ENCODE measurements at regions of chr14 and their contacts with region 1.

Region 1: DNA sequence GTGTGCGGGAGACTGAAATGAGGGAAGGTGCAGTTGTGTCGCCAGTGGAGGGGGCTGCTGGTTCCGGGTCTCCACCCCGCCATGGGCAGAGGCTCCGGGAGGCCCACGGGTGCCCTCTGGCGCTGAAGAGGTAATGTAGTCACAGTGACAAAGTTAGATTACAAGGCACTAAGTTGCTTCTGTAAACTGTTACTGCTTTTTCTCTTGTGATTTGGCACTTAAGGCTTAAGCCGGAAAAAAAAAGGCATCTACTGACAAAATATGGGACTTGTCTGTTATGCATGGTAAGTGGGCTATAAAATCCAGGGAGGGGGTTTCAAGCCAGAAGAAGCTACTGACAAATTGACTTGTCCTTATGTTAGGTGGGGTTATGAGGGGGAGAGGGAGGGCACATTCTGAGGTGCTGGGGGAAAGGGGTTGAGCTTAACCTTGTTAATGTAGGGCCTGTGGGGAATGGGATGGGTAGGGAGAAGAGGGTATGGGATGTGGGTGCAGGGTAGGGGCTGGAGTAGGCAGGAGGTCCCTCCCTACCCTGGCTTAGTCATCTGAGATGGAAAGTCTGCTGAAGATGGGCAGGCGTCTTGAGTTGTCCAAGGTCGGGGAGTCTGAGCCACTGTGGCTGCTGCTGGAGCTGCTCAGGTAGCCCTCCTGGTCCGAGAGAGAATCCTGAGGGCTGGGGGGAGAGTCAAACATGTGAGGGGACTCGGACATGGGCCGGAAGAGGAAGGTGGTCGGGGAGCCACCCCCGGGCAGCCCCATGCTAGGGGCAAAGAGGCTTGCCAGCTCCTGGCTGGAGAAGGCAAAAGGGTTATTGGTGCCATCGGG is 3.7 kb downstream of the ZFP36L1 start:
- DNase-seq: peak; percentile 62
- ATAC-seq: no peak
- H3K4me3 Mint-ChIP-seq: peak overlapping the region; percentile 100
- H3K27ac Mint-ChIP-seq: peak overlapping the region; percentile 99
- H3K4me1 Mint-ChIP-seq: peaks cover 54% of the 10 kb centered on the region
- H3K27me3 Mint-ChIP-seq: no peaks in the 10 kb centered on the region
- CTCF ChIP-seq: no peak

Region 2: DNA sequence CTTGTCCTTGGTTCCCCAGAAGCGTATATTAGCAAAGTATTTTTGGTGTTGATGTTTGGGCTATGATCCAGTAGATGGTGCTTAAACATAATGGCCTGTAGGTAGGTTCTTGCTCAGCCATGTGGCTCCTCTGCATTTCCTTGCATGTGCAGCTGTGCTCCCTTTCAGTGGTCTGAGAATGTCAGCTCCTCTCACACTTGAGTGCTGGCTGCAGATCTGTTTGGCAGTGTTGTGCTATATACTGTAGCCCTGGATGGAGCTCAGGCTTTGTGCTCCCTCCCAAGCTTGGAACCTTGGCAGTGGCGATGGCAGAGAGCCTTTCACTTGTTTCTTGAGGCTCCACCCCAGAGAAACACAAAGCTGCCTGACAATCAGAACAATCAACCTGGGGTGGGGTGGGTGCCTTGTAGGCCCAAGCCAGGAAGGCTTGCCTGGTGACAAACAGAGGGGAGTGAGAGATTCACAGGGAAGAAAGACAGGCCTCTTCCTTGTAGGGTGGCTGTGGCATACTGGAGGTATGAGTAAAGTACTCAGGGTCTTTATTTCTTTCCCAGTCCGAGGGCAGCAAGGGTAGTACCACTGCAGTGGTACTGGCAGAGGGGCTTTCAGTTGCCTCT is 714.3 kb before region 1 on chr14:
- CTCF ChIA-PET with region 1: no interaction called
- POLR2A ChIA-PET with region 1: no interaction called
- intact Hi-C with region 1: no loop called
- DNase-seq: no peak
- ATAC-seq: no peak
- H3K4me3 Mint-ChIP-seq: no peak overlapping the region
- H3K27ac Mint-ChIP-seq: no peak overlapping the region
- H3K4me1 Mint-ChIP-seq: peaks cover 28% of the 10 kb centered on the region
- H3K27me3 Mint-ChIP-seq: no peaks in the 10 kb centered on the region
- CTCF ChIP-seq: no peak

Region 3: DNA sequence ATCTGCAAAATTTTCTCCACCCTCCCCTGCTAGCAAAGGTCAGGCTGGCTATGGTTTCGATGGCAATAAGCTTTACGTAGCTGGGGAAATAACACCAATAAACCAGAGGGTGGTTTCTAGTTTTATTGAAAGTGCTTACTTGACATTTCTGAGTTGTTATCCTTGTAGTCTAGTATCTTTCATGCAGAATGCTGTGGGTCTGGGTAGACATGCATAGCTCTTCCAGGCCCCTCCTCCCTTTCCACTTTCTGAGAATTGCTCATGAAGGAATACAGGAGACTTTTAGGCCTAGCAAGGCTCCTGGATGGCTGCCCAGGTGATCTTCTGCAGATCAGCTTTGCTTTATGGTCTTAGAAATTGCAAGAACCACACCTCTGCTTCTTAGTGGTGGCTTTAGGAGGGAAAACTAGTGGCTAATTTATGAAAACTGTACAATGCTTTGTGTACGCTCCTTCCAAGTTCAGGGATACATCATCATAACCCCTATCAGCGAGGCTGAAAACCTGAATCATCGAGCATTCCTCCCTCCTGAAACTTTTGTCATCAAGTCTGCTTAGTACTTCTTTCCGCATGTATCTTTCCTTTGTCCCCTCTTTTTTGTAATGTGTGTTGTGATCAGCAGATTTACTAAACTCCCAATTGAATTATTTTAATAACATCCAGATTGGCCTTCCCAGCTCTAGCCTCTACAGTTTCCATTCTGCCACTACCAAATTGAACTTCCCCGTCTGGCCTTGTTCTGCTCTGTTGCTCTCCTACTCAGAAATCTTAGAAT is 496.6 kb before region 1 on chr14:
- CTCF ChIA-PET with region 1: no interaction called
- POLR2A ChIA-PET with region 1: interaction called, 361 read pairs
- intact Hi-C with region 1: no loop called
- DNase-seq: no peak
- ATAC-seq: peak; percentile 35
- H3K4me3 Mint-ChIP-seq: peak overlapping the region; percentile 59
- H3K27ac Mint-ChIP-seq: peak overlapping the region; percentile 96
- H3K4me1 Mint-ChIP-seq: peaks cover 77% of the 10 kb centered on the region
- H3K27me3 Mint-ChIP-seq: no peaks in the 10 kb centered on the region
- CTCF ChIP-seq: no peak

Region 4: GRCh38 chr14:68495101-68496039 is 293.8 kb before region 1 on chr14:
- CTCF ChIA-PET with region 1: interaction called, 8 read pairs
- POLR2A ChIA-PET with region 1: interaction called, 585 read pairs
- intact Hi-C with region 1: loop called (anchors 1 kb)
- DNase-seq: no peak
- ATAC-seq: peak; percentile 92
- H3K4me3 Mint-ChIP-seq: peak overlapping the region; percentile 64
- H3K27ac Mint-ChIP-seq: peak overlapping the region; percentile 98
- H3K4me1 Mint-ChIP-seq: peaks cover 84% of the 10 kb centered on the region
- H3K27me3 Mint-ChIP-seq: no peaks in the 10 kb centered on the region
- CTCF ChIP-seq: no peak

Region 5: GRCh38 chr14:68627880-68628607 is 161.2 kb before region 1 on chr14:
- CTCF ChIA-PET with region 1: no interaction called
- POLR2A ChIA-PET with region 1: interaction called, 12 read pairs
- intact Hi-C with region 1: no loop called
- DNase-seq: peak; percentile 52
- ATAC-seq: peak; percentile 76
- H3K4me3 Mint-ChIP-seq: peak overlapping the region; percentile 80
- H3K27ac Mint-ChIP-seq: peak overlapping the region; percentile 80
- H3K4me1 Mint-ChIP-seq: peaks cover 28% of the 10 kb centered on the region
- H3K27me3 Mint-ChIP-seq: no peaks in the 10 kb centered on the region
- CTCF ChIP-seq: no peak

Region 6: GRCh38 chr14:68734231-68734775 is 54.9 kb before region 1 on chr14:
- CTCF ChIA-PET with region 1: no interaction called
- POLR2A ChIA-PET with region 1: interaction called, 49 read pairs
- intact Hi-C with region 1: loop called (anchors 1 kb)
- DNase-seq: no peak
- ATAC-seq: peak; percentile 74
- H3K4me3 Mint-ChIP-seq: peak overlapping the region; percentile 39
- H3K27ac Mint-ChIP-seq: peak overlapping the region; percentile 82
- H3K4me1 Mint-ChIP-seq: peaks cover 78% of the 10 kb centered on the region
- H3K27me3 Mint-ChIP-seq: no peaks in the 10 kb centered on the region
- CTCF ChIP-seq: no peak

Region 7: GRCh38 chr14:68843471-68844209 is 54.4 kb after region 1 on chr14:
- CTCF ChIA-PET with region 1: interaction called, 10 read pairs
- POLR2A ChIA-PET with region 1: interaction called, 11 read pairs
- intact Hi-C with region 1: loop called (anchors 1 kb)
- DNase-seq: peak; percentile 66
- ATAC-seq: peak; percentile 93
- H3K4me3 Mint-ChIP-seq: peak overlapping the region; percentile 65
- H3K27ac Mint-ChIP-seq: peak overlapping the region; percentile 4
- H3K4me1 Mint-ChIP-seq: peaks cover 15% of the 10 kb centered on the region
- H3K27me3 Mint-ChIP-seq: peaks cover 4% of the 10 kb centered on the region
- CTCF ChIP-seq: peak; percentile 93

Region 8: DNA sequence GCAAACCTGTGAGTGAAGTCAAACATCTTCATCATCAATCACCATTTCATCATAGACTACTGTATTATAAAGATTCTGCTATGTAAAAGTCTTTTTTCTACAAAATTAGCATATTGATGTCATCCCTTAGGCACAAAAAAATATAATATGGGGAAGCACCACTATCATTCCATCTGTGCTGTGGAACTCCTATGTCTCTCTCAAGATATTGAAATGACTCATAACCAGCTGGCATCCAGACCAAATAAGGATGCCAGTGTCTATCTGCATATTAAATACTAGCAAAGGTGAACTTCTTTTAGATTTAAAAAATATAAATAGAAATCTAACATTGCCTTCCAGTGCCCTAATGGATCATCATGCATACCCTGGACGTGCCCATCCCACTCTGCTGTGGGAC is 381.6 kb after region 1 on chr14:
- CTCF ChIA-PET with region 1: no interaction called
- POLR2A ChIA-PET with region 1: no interaction called
- intact Hi-C with region 1: no loop called
- DNase-seq: no peak
- ATAC-seq: no peak
- H3K4me3 Mint-ChIP-seq: no peak overlapping the region
- H3K27ac Mint-ChIP-seq: no peak overlapping the region
- H3K4me1 Mint-ChIP-seq: no peaks in the 10 kb centered on the region
- H3K27me3 Mint-ChIP-seq: peaks cover 10% of the 10 kb centered on the region
- CTCF ChIP-seq: no peak